SK-N-SH (cell line): ENCODE measurements at regions of chr16 and their contacts with region 1.

Region 1: GRCh38 chr16:89334050-89334449 is 116.5 kb downstream of the ZNF778 start:
- DNase-seq: no peak
- H3K4me3 ChIP-seq: no peak overlapping the region
- H3K27ac ChIP-seq: peak overlapping the region; percentile 11 to 66; a peak in 3 of 4 replicates
- H3K4me1 ChIP-seq: peaks cover 28 to 37% of the 10 kb centered on the region in 2 experiments; a peak in 3 of 4 replicates
- H3K27me3 ChIP-seq: no peaks in the 10 kb centered on the region
- CTCF ChIP-seq: no peak
- EP300 ChIP-seq: no peak
- RAD21 ChIP-seq: no peak

Region 2: GRCh38 chr16:88633684-88634140 is 700.3 kb before region 1 on chr16:
- CTCF ChIA-PET with region 1: no interaction called
- POLR2A ChIA-PET with region 1: no interaction called
- DNase-seq: peak; percentile 60
- H3K4me3 ChIP-seq: no peak overlapping the region
- H3K27ac ChIP-seq: no peak overlapping the region
- H3K4me1 ChIP-seq: no peaks in the 10 kb centered on the region
- H3K27me3 ChIP-seq: peaks cover under 1% of the 10 kb centered on the region; the same call in 1 of the 2 replicates
- CTCF ChIP-seq: peak; percentile 16; the same call in 1 of the 2 replicates
- EP300 ChIP-seq: no peak
- RAD21 ChIP-seq: no peak

Region 3: DNA sequence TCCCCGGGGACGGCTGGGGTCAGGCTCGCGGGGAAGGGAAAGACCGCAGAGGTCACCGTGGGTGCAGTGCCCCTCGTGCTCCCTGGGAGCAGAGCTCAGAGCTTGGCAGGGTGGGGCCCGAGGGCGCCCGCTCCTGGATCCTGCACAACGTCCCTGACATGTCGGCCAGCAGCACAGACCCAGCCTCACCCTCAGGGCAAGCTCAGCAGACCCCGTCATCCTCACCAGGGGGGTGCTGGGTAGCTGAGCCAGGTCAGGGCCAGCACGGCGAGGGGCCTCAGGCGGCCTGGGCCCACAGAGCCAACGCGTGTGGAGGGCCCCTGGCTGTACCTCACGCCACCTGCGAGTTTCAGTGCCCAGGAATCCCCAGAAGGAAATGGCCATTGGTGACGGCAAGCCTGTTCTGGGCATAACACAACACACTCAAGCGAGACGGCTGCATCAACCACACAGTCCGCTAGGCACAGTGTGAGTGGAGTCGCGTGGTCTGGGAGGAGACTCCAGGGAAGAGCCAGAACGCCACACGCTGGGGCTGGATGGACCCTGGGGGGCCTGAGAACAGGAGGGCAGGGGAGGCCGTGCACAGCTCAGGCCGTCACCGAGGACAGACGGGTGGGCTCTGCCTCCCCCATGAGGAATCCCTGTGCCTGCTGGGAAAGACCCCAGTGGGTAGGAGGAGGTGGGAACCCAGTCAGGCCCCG is 56.3 kb before region 1 on chr16:
- CTCF ChIA-PET with region 1: no interaction called
- POLR2A ChIA-PET with region 1: no interaction called
- DNase-seq: no peak
- H3K4me3 ChIP-seq: no peak overlapping the region
- H3K27ac ChIP-seq: no peak overlapping the region
- H3K4me1 ChIP-seq: no peaks in the 10 kb centered on the region
- H3K27me3 ChIP-seq: no peaks in the 10 kb centered on the region
- CTCF ChIP-seq: no peak
- EP300 ChIP-seq: no peak
- RAD21 ChIP-seq: no peak

Region 4: DNA sequence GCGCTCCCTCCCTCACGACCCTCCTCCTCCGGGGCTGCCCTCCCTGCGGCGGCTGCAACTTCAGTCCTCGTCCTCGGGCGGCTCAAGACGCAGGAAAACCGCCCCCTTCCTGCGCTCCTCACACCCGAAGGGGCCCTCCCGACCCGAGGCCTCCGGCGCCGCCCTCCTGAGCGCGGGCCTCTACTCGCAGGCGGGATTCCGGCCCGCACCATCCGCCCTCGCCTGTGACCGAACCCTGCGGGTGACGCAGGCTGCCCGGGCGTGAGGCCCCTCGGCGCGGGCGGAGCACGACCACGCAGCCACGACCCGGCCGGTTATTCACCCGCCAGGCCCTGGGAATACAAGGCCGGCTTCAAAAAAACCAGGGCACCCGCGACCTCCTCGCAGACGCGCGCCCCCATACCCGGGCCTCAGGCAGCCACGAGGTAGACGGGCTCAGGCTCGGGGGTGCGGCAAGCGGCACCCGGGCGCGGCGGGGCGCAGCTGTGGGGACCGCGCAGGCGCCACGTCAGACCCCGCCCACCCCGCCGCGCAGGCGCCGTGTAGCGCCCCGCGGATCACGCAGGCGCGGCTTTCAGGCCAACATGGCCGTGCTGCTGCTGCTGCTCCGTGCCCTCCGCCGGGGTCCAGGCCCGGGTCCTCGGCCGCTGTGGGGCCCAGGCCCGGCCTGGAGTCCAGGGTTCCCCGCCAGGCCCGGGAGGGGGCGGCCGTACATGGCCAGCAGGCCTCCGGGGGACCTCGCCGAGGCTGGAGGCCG is 174.0 kb after region 1 on chr16 and contains the start of gene SPG7:
- CTCF ChIA-PET with region 1: interaction called, 11 read pairs
- POLR2A ChIA-PET with region 1: no interaction called
- DNase-seq: peak; percentile 99
- H3K4me3 ChIP-seq: peak within 1 kb of the TSS; percentile 73 to 83
- H3K27ac ChIP-seq: peak within 1 kb of the TSS; percentile 76 to 79
- H3K4me1 ChIP-seq: peaks cover 3 to 13% of the 10 kb centered on the region in 2 experiments; a peak in 2 of 4 replicates
- H3K27me3 ChIP-seq: no peaks in the 10 kb centered on the region
- CTCF ChIP-seq: no peak
- EP300 ChIP-seq: no peak
- RAD21 ChIP-seq: no peak
- polyA plus RNA-seq, gene SPG7: 100 and 107 TPM in 2 replicates